Activated T-helper 2 cell treated with anti-CD3 and anti-CD28 coated beads, Interferon-gamma antibody, Interleukin-2, Interleukin-4, amounts not matched to agents 10 μg/mL and 5 μg/mL and 100 μg/mL, durations not matched to agents 14 hours and 24 hours and 36 hours (primary cell): ENCODE measurements at regions of chr14 and their contacts with region 1.

Region 1: GRCh38 chr14:22653012-22653621 is 9.0 kb upstream of the OR6J1 start:
- DNase-seq: peak; percentile 40
- H3K4me3 Mint-ChIP-seq: no peak overlapping the region
- H3K27ac Mint-ChIP-seq: no peak overlapping the region
- H3K4me1 Mint-ChIP-seq: peaks cover 2% of the 10 kb centered on the region
- H3K27me3 Mint-ChIP-seq: no peaks in the 10 kb centered on the region

Region 2: DNA sequence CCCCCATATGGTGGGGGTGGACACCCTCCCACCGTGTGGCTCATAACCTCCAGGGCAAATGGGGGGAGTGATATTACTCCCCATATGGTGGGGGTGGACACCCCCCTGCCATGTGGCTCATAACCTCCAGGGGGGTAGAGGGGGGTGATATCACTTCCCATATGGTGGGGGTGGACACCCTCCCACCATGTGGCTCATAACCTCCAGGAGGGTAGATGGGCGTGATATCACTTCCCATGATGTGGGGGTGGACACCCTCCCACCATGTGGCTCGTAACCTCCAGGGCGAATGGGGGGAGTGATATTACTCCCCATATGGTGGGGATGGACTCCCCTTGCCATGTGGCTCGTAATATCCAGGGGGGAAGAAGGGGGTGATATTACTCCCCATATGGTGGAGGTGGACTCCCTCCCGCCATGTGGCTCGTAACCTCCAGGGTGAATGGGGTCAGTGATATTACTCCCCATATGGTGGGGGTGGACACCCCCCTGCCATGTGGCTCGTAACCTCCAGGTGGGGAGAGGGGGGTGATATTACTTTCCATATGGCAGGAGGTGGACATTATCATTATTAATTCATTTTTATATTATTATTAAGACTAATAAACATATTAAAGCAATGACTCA is 62.2 kb after region 1 on chr14:
- intact Hi-C with region 1: loop called (anchors 5 kb)
- DNase-seq: no peak
- H3K4me3 Mint-ChIP-seq: no peak overlapping the region
- H3K27ac Mint-ChIP-seq: no peak overlapping the region
- H3K4me1 Mint-ChIP-seq: peaks cover 22% of the 10 kb centered on the region
- H3K27me3 Mint-ChIP-seq: peaks cover 14% of the 10 kb centered on the region